ENCODE measurements at regions of chr19 and their contacts with region 1.

Region 1: DNA sequence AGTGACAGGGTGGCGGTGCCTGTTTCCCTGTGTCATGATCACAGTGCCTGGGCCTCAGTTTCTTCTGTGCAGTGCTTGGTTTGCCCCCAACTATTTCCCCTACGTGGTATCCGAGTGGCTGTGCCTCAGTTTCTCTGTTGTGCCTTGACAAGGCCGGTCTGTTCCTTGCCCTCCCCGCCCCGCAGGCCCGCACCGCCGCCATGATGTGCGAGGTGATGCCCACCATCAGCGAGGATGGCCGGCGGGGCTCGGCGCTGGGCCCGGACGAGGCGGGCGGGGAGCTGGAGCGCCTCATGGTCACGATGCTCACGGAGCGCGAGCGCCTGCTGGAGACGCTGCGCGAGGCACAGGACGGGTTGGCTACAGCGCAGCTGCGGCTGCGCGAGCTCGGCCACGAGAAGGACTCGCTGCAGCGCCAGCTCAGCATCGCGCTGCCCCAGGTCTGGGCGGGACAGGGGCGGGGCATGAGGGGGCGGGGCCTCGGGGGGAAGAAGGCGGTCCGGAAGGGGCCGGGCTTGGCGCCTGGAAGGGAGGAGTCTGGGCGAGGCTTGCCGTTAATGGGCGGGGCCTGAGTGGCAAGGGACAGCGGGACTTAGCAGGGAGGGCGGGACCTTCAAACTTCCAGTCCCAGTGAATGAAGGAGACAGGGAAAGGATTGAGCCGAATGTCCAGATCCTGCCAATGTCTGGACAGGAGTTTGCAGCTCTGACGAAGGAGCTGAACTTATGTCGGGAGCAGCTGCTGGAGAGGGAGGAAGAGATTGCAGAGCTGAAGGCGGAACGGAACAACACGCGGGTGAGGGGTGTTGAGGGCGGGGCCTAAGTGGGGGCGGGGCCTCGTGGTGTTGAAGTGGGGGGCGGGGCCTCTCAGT is 8.6 kb downstream of the PPFIA3 start:
- DNase-seq: peak; percentile 89 to 97 (median 94)
- ATAC-seq: peak; percentile 99
- H3K4me3 ChIP-seq: peak overlapping the region; percentile 71
- H3K4me3 Mint-ChIP-seq: peak overlapping the region; percentile 82 to 98 (median 90)
- H3K27ac ChIP-seq: no peak overlapping the region
- H3K27ac Mint-ChIP-seq: peak overlapping the region; percentile 8 to 98 (median 88)
- H3K4me1 ChIP-seq: peaks cover 5 to 8% of the 10 kb centered on the region in 2 donors
- H3K4me1 Mint-ChIP-seq: peaks cover 10 to 18% (median 12%) of the 10 kb centered on the region in 7 donors
- H3K27me3 ChIP-seq: no peaks in the 10 kb centered on the region
- H3K27me3 Mint-ChIP-seq: peaks cover 0 to 14% (median 0%) of the 10 kb centered on the region in 5 donors

Region 2: DNA sequence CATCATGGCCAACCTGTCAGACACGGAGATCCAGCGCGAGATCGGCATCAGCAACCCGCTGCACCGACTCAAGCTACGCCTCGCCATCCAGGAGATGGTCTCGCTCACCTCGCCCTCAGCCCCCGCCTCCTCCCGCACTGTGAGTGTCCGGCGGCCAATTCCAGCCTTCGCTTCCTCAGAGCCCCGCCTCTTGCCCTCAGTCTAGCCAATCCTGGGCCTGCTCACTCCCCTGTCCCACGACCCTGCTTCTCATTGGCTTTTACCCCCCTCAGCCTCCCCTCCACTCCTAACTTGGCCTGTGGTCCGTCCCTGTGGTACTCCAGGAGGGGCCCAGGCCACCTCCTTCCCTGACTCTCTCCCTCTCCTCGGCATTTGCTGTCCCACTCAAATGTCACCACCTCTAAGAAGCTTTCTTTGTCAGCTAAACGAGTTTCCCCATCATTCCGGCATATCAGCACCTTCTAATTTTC is 15.0 kb after region 1 on chr19:
- CTCF ChIA-PET with region 1: interaction called, 3 read pairs
- POLR2A ChIA-PET with region 1: no interaction called
- intact Hi-C with region 1: loop called in 1 of 2 experiments (anchors 2 kb)
- DNase-seq: peak in 5 of 9 donors; percentile 18 to 79 (median 34)
- ATAC-seq: peak; percentile 90
- H3K4me3 ChIP-seq: peak overlapping the region; percentile 41
- H3K4me3 Mint-ChIP-seq: peak overlapping the region; percentile 66 to 94 (median 77)
- H3K27ac ChIP-seq: no peak overlapping the region
- H3K27ac Mint-ChIP-seq: peak overlapping the region in 2 of 9 donors; percentile 20 to 78
- H3K4me1 ChIP-seq: peaks cover 0 to 7% of the 10 kb centered on the region in 2 donors
- H3K4me1 Mint-ChIP-seq: peaks cover 17 to 29% (median 27%) of the 10 kb centered on the region in 7 donors
- H3K27me3 ChIP-seq: no peaks in the 10 kb centered on the region
- H3K27me3 Mint-ChIP-seq: peaks cover 26 to 41% (median 34%) of the 10 kb centered on the region in 5 donors